ENCODE measurements at regions of chr14 and their contacts with region 1.

Region 1: DNA sequence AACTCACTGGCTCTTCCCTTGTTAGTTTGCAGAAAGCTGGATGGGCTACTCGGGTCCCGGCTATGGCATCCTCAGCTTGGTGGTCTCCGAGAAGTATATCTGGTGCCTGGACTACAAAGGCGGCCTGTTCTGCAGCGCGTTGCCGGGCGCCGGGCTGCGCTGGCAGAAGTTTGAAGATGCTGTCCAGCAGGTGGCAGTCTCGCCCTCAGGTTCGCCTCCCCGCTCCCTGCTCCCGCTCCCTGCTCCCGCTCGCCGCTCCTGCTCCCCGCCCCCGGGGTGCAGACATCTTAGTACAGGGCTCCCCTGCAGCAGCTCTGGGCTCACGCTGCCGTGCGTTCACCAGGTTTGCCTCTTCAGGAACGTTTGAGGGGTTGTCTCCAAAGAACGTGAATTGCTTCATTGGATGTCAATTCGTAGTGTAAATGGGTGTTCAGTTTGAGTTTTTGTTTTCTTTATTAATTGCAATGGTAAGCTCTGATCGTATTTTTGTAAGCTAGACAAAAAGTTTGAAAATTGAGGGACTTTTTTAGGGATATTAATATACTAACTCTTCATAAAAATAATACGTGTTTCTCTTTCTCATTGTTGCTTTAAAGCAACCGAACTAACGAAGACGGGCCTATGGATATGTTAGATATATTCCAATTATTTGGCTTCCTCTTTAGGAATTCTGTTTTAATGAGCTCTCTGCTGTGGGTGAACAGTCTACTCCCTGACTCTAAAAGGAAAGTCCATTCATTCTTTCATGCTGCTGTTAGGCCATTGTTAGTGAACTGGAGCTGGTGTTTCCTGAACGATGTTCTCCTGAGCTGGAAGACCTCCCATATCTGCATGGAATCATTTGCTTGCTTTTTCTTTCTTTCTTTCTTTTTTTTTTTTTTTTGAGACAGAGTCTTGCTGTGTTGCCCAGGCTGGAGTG is 71.3 kb downstream of the ANKRD9 start:
- DNase-seq: peak; percentile 68
- H3K4me3 ChIP-seq: peak overlapping the region; percentile 16 to 30 (median 20)
- H3K27ac ChIP-seq: no peak overlapping the region
- H3K4me1 ChIP-seq: peaks cover 18% of the 10 kb centered on the region
- H3K27me3 ChIP-seq: no peaks in the 10 kb centered on the region
- CTCF ChIP-seq: peak; percentile 55 to 79

Region 2: GRCh38 chr14:102352213-102352612 is 86.0 kb before region 1 on chr14:
- CTCF ChIA-PET with region 1: no interaction called
- dilution Hi-C with region 1: no loop called
- in situ Hi-C with region 1: no loop called
- intact Hi-C with region 1: no loop called
- DNase-seq: no peak
- H3K4me3 ChIP-seq: no peak overlapping the region
- H3K27ac ChIP-seq: no peak overlapping the region
- H3K4me1 ChIP-seq: no peaks in the 10 kb centered on the region
- H3K27me3 ChIP-seq: no peaks in the 10 kb centered on the region
- CTCF ChIP-seq: no peak

Region 3: GRCh38 chr14:102509744-102510615 is 71.7 kb after region 1 on chr14 and contains the start of gene ANKRD9:
- CTCF ChIA-PET with region 1: no interaction called
- dilution Hi-C with region 1: loop called (anchors 5 kb)
- in situ Hi-C with region 1: loop called in 1 of 2 experiments (anchors 5 kb)
- intact Hi-C with region 1: no loop called
- DNase-seq: peak; percentile 93
- H3K4me3 ChIP-seq: peak within 1 kb of the TSS; percentile 52 to 70 (median 67)
- H3K27ac ChIP-seq: peak within 1 kb of the TSS; percentile 41
- H3K4me1 ChIP-seq: peaks cover 12% of the 10 kb centered on the region
- H3K27me3 ChIP-seq: no peaks in the 10 kb centered on the region
- CTCF ChIP-seq: no peak
- total RNA-seq, gene ANKRD9: 11.8 to 24.0 TPM

Region 4: DNA sequence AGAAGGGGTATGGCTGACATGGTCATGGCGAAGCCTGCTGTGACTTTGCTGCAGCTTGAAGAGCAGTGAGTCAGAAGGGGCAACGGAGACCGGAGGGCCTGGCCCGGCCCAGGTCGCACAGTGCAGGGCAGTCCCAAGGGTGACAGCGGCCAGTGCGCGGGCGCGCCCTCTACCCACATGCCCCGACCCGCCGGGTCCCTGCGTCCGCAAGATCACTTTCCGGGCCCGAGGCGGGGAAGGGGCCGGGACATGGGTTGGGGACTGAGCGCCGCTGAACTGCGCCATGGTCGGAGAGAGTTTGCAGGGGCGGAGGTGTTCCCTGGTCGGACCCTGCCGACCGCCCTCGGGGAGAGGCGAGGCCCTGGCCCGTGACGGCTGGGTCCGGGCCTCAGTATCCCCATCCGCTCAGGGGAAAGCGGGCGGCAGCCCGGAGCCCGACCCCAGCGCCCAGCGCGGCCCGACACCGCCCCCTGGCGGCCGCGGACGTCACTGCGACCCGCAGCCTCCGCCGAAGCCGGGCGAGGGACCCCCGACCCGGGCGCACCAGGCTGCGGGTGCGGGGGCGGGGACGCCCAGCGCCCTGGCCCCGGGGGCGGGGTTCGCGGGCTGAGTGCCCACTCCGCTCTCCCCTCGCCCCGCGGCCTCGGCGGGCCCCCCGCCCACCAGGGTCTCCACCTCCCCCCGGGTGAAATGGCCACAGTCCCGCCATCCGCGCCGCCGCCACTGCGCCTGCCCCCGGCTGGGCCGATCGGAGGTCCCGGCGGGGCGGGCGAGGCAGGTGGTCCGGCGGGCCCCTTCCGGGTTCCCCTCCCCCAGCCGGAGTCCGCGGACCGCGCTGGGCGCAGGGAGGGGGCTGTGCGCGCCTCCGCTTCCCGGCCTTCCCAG is 78.5 kb after region 1 on chr14:
- CTCF ChIA-PET with region 1: no interaction called
- dilution Hi-C with region 1: loop called (anchors 5 kb)
- in situ Hi-C with region 1: loop called in 1 of 2 experiments (anchors 5 kb)
- intact Hi-C with region 1: loop called (anchors 1 kb)
- DNase-seq: peak; percentile 35
- H3K4me3 ChIP-seq: peak overlapping the region; percentile 35 to 73 (median 54)
- H3K27ac ChIP-seq: no peak overlapping the region
- H3K4me1 ChIP-seq: peaks cover 6% of the 10 kb centered on the region
- H3K27me3 ChIP-seq: no peaks in the 10 kb centered on the region
- CTCF ChIP-seq: peak; percentile 55 to 63

Region 5: GRCh38 chr14:102683399-102684297 is 245.4 kb after region 1 on chr14:
- CTCF ChIA-PET with region 1: no interaction called
- dilution Hi-C with region 1: loop called (anchors 10 kb)
- in situ Hi-C with region 1: no loop called
- intact Hi-C with region 1: no loop called
- DNase-seq: no peak
- H3K4me3 ChIP-seq: no peak overlapping the region
- H3K27ac ChIP-seq: no peak overlapping the region
- H3K4me1 ChIP-seq: no peaks in the 10 kb centered on the region
- H3K27me3 ChIP-seq: no peaks in the 10 kb centered on the region
- CTCF ChIP-seq: no peak

Region 6: DNA sequence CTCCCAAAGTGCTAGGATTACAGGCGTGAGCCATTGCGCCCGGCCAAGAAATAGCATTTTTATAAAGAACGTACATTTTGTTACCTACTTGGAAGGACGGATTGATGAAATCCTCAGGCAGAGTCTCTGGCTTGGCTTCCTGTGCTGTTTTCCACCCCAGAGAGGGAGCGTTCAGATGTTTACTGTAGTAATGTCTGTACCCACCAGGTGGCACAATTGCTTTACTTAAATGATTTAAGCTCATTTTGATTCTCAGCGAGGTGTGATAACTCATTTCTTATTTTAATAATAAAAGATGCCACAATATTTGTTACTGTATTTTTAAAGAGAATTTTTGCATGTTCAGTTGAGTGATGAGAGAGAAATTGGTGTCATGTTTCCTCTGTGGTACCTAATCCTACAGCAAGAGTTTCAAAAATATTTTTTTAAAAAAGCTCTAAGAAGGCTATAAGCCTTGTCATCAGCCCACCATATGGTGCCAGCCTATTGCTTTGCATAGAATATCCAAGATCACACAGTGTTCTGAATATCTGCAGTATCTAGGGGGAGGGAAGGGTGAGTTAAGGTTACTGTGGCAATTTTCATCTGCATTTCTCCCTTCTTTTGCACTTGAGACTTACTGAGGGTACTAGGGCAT is 256.4 kb after region 1 on chr14:
- CTCF ChIA-PET with region 1: no interaction called
- dilution Hi-C with region 1: loop called (anchors 10 kb)
- in situ Hi-C with region 1: no loop called
- intact Hi-C with region 1: loop called (anchors 1 kb)
- DNase-seq: peak; percentile 54
- H3K4me3 ChIP-seq: no peak overlapping the region
- H3K27ac ChIP-seq: no peak overlapping the region
- H3K4me1 ChIP-seq: peaks cover 7% of the 10 kb centered on the region
- H3K27me3 ChIP-seq: no peaks in the 10 kb centered on the region
- CTCF ChIP-seq: peak; percentile 52 to 55

Region 7: GRCh38 chr14:102917469-102918211 is 479.4 kb after region 1 on chr14:
- CTCF ChIA-PET with region 1: no interaction called
- dilution Hi-C with region 1: no loop called
- in situ Hi-C with region 1: no loop called
- intact Hi-C with region 1: loop called (anchors 1 kb)
- DNase-seq: no peak
- H3K4me3 ChIP-seq: no peak overlapping the region
- H3K27ac ChIP-seq: no peak overlapping the region
- H3K4me1 ChIP-seq: peaks cover 2% of the 10 kb centered on the region
- H3K27me3 ChIP-seq: peaks cover 2% of the 10 kb centered on the region
- CTCF ChIP-seq: peak; percentile 54 to 62